AG04450 (cell line): ENCODE measurements at regions of chr2 and their contacts with region 1.

Region 1: DNA sequence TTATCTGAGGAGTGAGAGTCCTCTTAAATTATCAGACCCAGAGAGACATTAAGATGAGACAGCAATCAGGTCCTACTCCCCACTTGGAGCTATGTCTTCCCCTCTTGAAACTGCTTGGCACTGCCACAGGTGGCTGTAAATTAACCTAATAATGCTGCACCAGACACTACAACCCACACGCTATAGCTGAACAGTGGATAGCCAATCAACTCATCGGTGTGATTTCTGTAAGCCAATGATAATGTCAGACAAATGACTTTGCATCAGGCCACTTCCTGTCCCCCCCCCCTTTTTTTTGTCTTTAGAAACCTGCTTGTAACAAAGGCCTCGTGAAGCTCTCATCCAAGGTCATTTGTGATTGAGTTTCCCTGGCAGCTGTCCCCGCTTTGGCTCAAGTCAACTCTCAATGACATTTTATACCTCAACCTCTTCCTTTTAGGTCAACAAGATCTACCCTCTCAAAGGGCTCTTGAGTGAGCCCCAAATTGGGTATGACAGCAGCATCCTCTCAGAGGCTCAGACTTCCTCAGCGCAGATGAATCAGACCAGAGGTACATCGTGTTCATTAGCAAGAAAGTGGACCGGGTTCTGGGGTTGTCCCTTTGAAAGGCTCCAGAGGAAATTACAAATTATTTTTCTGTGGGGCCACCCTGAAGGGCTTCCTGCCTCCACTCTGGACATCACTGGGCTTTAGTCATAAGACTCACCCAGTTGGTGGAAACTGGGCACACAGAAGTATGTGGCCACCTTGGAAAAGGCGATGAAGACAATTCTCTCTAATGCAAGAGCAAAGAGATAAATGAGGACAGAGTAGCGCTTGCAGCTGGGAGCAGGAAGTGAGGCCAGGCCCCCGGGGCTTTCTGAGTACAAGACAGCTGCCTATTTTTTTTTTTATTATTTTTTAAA is 73.6 kb downstream of the COPS8 start:
- DNase-seq: no peak
- H3K4me3 ChIP-seq: no peak overlapping the region
- H3K27ac ChIP-seq: peak overlapping the region; percentile 21
- H3K27me3 ChIP-seq: no peaks in the 10 kb centered on the region
- CTCF ChIP-seq: no peak

Region 2: DNA sequence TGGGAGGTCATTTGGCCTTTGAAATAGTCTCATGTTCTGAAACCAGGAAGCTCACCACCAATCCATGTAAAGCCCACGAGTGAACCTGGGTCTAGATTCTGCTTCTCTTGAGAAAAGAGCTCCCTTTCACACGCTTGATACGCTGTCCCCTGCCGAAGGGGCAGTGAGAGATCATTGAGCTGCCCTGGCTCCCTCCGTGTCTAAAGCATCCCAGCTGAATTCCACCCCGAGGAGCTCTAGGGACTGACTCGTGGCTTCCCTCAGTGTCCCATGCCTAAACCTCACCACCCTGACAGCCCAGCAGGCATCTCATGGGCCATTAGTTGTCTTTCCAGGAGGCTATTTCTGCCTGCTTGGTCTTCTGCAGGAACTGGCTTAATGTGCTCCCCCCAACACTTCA is 186.2 kb after region 1 on chr2:
- CTCF ChIA-PET with region 1: interaction called, 3 read pairs
- POLR2A ChIA-PET with region 1: interaction called, 12 read pairs
- DNase-seq: no peak
- H3K4me3 ChIP-seq: no peak overlapping the region
- H3K27ac ChIP-seq: peak overlapping the region; percentile 65
- H3K27me3 ChIP-seq: no peaks in the 10 kb centered on the region
- CTCF ChIP-seq: no peak